ENCODE measurements at regions of chr6 and their contacts with region 1.

Region 1: DNA sequence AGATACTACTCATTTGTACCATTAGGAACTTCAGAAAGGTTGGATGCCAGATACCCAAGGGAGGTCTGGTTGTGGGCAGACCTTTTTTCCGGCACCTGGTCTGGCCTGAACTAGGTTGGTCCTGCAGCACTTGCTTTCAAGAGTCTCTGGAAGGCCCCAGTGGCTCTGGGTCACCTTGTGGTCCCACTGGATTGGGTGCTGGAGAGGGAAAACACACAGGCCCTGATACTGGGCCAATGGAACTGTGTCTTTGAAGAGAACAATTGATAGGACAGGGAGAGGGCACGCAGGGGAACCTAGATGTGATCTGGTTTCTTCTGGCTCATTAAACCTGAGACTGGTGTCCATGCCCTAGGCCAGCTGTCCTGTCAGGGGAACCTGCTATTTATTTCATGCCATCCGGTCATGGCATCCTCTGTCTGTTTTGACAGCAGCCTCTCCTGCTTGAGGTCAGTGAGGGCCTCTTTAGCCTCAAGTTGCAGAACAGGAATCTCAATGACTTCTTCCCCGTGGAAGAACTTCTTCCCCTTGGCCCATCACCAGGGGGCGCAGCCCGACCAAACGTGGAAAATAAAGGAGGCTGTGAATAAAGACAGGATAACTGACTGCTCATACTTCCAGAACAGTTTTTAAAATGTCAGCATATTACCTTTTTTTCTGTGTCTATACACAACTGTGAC is 25.0 kb downstream of the TAF8 start:
- DNase-seq: peak; percentile 72 to 84 (median 75)
- ATAC-seq: peak; percentile 10 to 72 (median 66)
- H3K4me3 ChIP-seq: no peak overlapping the region
- H3K27ac ChIP-seq: peak overlapping the region in 8 of 12 donors; percentile 0 to 71 (median 30)
- H3K4me1 ChIP-seq: peaks cover 0 to 41% (median 0%) of the 10 kb centered on the region in 12 donors
- H3K27me3 ChIP-seq: no peaks in the 10 kb centered on the region
- CTCF ChIP-seq: peak; percentile 65 to 90 (median 83)
- POLR2A ChIP-seq: no peak

Region 2: DNA sequence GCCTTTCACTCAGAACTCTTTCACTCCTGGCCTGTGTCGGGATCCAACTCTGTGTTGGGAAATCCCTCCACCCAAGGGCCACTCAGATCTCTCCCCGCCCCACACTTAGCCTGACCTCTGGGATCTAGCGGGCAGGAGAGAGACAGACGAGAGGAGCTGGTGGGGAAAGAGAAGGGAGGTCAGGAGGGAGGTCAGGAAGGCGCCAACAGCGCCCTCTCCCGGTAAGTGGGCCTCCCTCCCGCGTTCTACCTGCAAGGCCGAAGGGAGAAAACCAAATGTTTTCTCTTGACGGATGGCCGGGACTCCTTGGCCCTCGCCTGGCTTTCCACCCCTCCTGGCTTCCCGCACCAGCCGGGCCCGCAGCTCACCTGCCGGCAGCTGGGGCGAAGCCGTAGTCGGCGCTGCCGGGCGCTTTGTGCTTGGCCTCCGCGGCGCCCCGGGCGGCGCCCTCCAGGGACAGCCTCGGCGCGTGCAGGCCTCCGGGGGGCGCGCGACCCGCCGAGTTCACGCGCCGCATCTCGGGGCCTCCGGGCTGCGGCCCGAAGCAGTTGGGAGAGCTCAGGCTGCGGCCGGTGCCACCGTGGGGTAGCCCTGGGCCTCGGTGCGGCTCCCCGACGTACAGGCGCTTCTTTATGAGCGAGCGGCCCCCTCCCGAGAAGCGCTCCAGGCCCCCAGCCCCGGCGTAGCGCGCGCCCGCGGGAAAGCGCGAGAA is 29.0 kb after region 1 on chr6:
- intact Hi-C with region 1: loop called in 1 of 10 experiments (anchors 2 kb)
- DNase-seq: peak; percentile 55 to 84 (median 80)
- ATAC-seq: peak; percentile 43 to 86 (median 78)
- H3K4me3 ChIP-seq: peak overlapping the region; percentile 17 to 64 (median 50)
- H3K27ac ChIP-seq: peak overlapping the region in 8 of 12 donors; percentile 2 to 64 (median 32)
- H3K4me1 ChIP-seq: peaks cover 0 to 37% (median 12%) of the 10 kb centered on the region in 12 donors
- H3K27me3 ChIP-seq: peaks cover 0 to 13% (median 0%) of the 10 kb centered on the region in 9 donors
- CTCF ChIP-seq: peak; percentile 63 to 89 (median 78)
- POLR2A ChIP-seq: peak in 1 of 2 donors; percentile 15

Region 3: GRCh38 chr6:42210551-42210950 is 135.3 kb after region 1 on chr6:
- intact Hi-C with region 1: loop called in 3 of 10 experiments (anchors 5 kb)
- DNase-seq: no peak
- ATAC-seq: peak in 1 of 4 donors; percentile 68
- H3K4me3 ChIP-seq: no peak overlapping the region
- H3K27ac ChIP-seq: no peak overlapping the region
- H3K4me1 ChIP-seq: peaks cover 0 to 18% (median 2%) of the 10 kb centered on the region in 12 donors
- H3K27me3 ChIP-seq: no peaks in the 10 kb centered on the region
- CTCF ChIP-seq: no peak
- POLR2A ChIP-seq: no peak

Region 4: DNA sequence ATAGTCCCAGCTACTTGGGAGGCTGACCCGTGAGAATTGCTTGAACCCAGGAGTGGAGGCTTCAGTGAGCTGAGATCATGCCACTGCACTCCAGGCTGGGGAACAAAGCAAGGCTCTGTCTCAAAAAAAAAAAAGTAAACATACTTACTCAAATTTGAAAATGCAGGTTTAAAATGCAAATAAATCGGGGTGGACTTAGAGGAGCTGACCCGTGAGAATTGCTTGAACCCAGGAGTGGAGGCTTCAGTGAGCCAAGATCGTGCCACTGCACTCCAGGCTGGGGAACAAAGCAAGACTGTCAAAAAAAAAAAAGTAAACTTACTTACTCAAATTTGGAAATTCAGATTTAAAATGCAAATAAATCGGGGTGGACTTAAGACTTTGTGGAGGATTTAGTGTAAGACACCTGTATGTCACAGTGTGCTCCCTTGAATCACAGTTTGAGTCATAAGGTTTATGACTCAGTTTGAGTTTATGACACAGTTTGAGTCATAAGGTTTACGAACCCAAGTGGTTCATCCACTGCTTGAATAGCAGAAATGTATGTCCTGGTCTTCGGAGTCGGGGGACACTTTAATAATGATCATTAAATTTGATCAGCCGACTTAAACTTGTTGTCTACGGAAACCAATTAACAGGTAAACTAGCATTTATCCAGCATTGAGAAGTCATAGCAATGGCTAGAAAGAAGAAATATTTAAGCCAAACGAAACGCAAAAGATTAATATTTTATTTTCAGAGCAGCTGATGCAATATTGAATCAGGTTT is 149.1 kb after region 1 on chr6:
- intact Hi-C with region 1: loop called in 2 of 10 experiments (anchors 5 kb)
- DNase-seq: no peak
- ATAC-seq: no peak
- H3K4me3 ChIP-seq: no peak overlapping the region
- H3K27ac ChIP-seq: no peak overlapping the region
- H3K4me1 ChIP-seq: peaks cover 0 to 11% (median 0%) of the 10 kb centered on the region in 12 donors
- H3K27me3 ChIP-seq: no peaks in the 10 kb centered on the region
- CTCF ChIP-seq: no peak
- POLR2A ChIP-seq: no peak

Region 5: DNA sequence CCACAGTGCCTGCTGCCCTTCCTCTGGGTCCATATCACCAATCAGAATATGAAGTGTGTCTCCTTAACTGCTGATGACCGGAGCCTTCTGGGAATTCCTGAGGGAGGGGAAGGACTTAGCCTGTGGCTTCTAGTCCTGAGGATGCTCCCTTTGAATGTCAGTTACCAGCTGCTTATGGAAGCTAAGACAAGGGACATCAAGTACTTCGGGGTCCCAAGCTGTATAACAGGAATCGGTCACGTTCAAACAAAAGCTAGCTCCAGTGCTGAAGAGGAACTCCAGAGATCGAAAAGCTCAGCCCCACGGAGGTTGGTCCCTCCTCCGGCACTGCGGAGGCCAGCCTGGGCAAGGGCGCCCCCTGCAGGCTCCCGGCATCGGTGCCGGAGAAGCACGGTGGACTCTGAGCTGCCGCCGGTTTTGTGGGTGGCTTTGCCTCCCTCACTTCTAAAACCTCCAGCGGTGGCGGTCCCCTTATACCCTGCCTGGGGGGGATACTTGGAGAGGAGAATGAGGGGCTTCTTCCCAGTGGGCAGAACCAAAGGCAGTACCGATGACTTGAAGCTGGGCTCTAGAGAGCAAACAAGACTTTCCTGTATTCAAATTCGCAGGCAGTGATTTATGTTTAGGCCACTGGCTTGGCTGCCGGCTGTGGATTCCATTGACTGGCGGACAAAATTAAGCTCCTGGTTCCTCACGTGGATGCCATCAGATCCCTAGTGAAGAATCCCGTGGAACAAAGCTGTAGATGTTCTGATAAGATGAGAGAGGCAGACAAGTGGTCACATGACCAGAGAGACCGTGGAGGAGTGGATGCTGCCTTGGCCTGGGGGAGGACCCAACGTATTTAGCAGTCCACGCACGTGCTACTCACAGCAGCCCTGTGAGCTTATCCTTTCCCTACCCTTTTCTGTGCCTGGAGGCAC is 472.4 kb after region 1 on chr6:
- intact Hi-C with region 1: loop called in 8 of 10 experiments (anchors 5 to 10 kb)
- DNase-seq: peak; percentile 82 to 92 (median 84)
- ATAC-seq: peak; percentile 94 to 99 (median 99)
- H3K4me3 ChIP-seq: peak overlapping the region; percentile 13 to 76 (median 53)
- H3K27ac ChIP-seq: peak overlapping the region in 9 of 12 donors; percentile 31 to 73 (median 45)
- H3K4me1 ChIP-seq: peaks cover 0 to 14% (median 4%) of the 10 kb centered on the region in 12 donors
- H3K27me3 ChIP-seq: peaks cover 0 to 4% (median 0%) of the 10 kb centered on the region in 9 donors
- CTCF ChIP-seq: peak; percentile 96 to 100 (median 99)
- POLR2A ChIP-seq: peak in 1 of 2 donors; percentile 24

Measured in heart left ventricle (tissue), 16 donors.